ENCODE measurements at regions of chr19 and their contacts with region 1.

Region 1: DNA sequence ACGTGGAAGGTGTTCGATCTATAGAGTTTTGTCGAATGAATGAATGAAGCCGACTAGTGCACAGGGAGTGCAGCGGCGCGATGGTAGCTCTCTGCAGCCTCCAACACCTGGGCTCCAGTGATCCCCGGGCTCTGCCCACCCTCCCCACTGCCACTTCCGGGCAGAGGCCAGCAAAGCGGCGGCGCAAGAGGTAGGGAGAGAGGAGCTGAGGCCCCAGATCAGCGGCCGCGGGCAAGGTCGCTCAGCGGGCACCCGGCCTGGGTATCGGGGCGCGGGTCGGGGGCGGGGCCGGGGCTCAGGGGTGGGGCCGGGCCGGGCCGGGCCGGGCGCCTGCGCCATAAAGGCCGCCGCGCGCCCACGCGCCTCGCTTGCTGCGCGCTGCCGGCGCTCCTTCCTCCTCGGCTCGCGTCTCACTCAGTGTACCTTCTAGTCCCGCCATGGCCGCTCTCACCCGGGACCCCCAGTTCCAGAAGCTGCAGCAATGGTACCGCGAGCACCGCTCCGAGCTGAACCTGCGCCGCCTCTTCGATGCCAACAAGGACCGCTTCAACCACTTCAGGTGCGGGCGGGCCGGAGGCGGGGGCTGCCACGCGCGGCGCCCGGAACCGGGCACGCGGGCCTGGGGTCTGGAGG is at the start of gene GPI:
- DNase-seq: peak; percentile 53 to 82 (median 65)
- ATAC-seq: peak; percentile 94
- H3K4me3 ChIP-seq: peak within 1 kb of the TSS; percentile 90
- H3K4me3 Mint-ChIP-seq: peak within 1 kb of the TSS; percentile 92 to 100 (median 96)
- H3K27ac ChIP-seq: peak within 1 kb of the TSS; percentile 73
- H3K27ac Mint-ChIP-seq: peak within 1 kb of the TSS; percentile 75 to 97 (median 85)
- H3K4me1 ChIP-seq: peaks cover 11 to 24% of the 10 kb centered on the region in 2 donors
- H3K4me1 Mint-ChIP-seq: peaks cover 32 to 70% (median 41%) of the 10 kb centered on the region in 7 donors
- H3K27me3 ChIP-seq: no peaks in the 10 kb centered on the region
- H3K27me3 Mint-ChIP-seq: no peaks in the 10 kb centered on the region
- total RNA-seq, gene GPI: 96.5 to 750 (median 104) TPM

Region 2: GRCh38 chr19:34351382-34351826 is 13.5 kb before region 1 on chr19:
- CTCF ChIA-PET with region 1: no interaction called
- POLR2A ChIA-PET with region 1: interaction called, 12 read pairs
- intact Hi-C with region 1: loop called (anchors 1 to 2 kb)
- DNase-seq: peak in 1 of 9 donors; percentile 16
- ATAC-seq: no peak
- H3K4me3 ChIP-seq: no peak overlapping the region
- H3K4me3 Mint-ChIP-seq: peak overlapping the region in 7 of 10 donors; percentile 12 to 75 (median 45)
- H3K27ac ChIP-seq: peak overlapping the region; percentile 43
- H3K27ac Mint-ChIP-seq: peak overlapping the region in 8 of 9 donors; percentile 76 to 91 (median 86)
- H3K4me1 ChIP-seq: peaks cover 18 to 25% of the 10 kb centered on the region in 2 donors
- H3K4me1 Mint-ChIP-seq: peaks cover 13 to 41% (median 26%) of the 10 kb centered on the region in 7 donors
- H3K27me3 ChIP-seq: no peaks in the 10 kb centered on the region
- H3K27me3 Mint-ChIP-seq: no peaks in the 10 kb centered on the region

Region 3: DNA sequence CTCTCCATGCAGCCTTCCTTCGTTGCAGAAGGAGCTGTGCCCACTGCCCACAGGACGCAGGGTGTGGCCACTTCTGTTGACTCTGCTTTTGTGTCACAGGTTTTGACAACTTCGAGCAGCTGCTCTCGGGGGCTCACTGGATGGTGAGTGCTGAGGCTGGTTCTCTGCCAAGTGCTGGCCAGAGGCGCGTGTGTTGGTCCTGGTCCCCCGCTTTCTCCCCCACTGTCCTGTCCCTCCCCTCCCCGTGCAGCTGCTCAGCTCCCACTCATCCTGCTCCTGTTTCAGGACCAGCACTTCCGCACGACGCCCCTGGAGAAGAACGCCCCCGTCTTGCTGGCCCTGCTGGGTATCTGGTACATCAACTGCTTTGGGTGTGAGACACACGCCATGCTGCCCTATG is 28.7 kb after region 1 on chr19:
- CTCF ChIA-PET with region 1: no interaction called
- POLR2A ChIA-PET with region 1: no interaction called
- intact Hi-C with region 1: no loop called
- DNase-seq: no peak
- ATAC-seq: no peak
- H3K4me3 ChIP-seq: no peak overlapping the region
- H3K4me3 Mint-ChIP-seq: no peak overlapping the region
- H3K27ac ChIP-seq: no peak overlapping the region
- H3K27ac Mint-ChIP-seq: no peak overlapping the region
- H3K4me1 ChIP-seq: no peaks in the 10 kb centered on the region
- H3K4me1 Mint-ChIP-seq: peaks cover 0 to 4% (median 0%) of the 10 kb centered on the region in 7 donors
- H3K27me3 ChIP-seq: no peaks in the 10 kb centered on the region
- H3K27me3 Mint-ChIP-seq: no peaks in the 10 kb centered on the region

Region 4: GRCh38 chr19:34525001-34525400 is 160.1 kb after region 1 on chr19:
- CTCF ChIA-PET with region 1: no interaction called
- POLR2A ChIA-PET with region 1: no interaction called
- intact Hi-C with region 1: no loop called
- DNase-seq: no peak
- ATAC-seq: no peak
- H3K4me3 ChIP-seq: no peak overlapping the region
- H3K4me3 Mint-ChIP-seq: no peak overlapping the region
- H3K27ac ChIP-seq: no peak overlapping the region
- H3K27ac Mint-ChIP-seq: no peak overlapping the region
- H3K4me1 ChIP-seq: no peaks in the 10 kb centered on the region
- H3K4me1 Mint-ChIP-seq: no peaks in the 10 kb centered on the region
- H3K27me3 ChIP-seq: no peaks in the 10 kb centered on the region
- H3K27me3 Mint-ChIP-seq: peaks cover 7 to 57% (median 49%) of the 10 kb centered on the region in 5 donors

Measured in naive thymus-derived CD4-positive, alpha-beta T cell (primary cell).